Head of caudate nucleus (tissue), 42 donors: ENCODE measurements at regions of chr6 and their contacts with region 1.

Region 1: DNA sequence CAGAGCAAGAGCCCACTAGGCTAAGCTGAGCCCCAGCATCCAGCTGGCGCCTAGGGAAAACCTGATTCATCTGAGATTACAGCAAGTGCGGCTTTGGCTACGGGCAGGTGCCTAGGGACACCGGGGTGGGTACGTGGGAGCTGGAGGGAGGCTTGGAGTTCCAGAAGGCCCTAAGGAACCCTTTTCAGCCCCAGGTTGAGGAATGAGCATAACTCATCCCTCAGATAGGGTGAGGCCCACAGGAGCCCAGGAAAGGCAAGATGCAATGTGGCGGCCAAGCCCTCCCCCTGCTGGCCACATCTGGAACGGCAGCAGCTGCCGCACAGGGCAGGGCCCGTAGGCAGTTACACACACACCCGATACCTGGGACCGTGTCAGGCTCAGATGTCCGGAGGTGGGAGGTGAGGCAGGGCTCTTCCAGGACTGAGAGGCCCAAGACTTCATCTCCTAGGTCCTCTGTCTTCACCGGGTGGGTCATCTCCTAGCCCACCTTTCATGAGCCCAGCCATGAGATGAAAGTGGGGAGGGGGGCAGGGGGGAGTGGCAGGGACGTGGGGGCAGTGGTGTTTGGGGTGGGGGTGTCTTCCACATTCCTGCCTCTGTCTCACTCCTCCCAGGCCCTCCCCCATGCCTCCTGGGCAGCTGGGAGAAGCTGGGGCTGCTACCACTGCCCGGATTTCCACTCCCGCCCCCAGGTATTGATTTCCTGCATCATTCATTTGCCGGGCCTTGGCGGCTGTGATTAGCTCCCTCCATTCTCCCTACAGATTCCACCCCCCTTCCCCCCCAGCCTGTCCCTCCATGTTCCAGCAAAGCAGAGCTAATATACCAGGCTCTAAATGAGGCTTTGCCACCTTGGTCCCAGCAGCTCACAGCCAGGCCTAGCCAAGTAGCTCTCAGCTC is 5.5 kb downstream of the MDGA1 start:
- DNase-seq: peak; percentile 60 to 93 (median 86)

Region 2: DNA sequence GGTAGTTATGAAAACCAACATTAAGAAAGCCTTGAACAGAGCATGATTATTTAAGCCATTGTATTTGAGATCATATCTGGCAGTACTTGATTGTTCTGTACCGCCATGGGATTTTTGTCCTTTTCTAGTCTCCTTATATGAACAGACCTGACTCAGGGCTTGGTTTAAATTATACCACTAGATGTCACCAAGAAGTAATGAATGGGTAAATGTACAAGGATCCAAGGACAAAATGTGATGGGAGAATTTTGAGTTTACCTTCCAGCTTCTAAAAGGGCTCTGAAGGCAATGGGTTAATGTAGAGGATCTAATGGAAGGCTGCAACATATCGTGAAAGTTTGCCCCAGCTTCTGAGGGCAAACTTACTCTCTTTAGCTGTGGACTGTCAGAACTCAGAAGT is 326.4 kb before region 1 on chr6:
- intact Hi-C with region 1: loop called (anchors 10 kb)
- DNase-seq: no peak

Region 3: GRCh38 chr6:37483917-37484785 is 208.0 kb before region 1 on chr6:
- intact Hi-C with region 1: loop called (anchors 5 kb)
- DNase-seq: peak; percentile 47 to 88 (median 80)

Region 4: GRCh38 chr6:37489660-37490361 is 202.3 kb before region 1 on chr6:
- intact Hi-C with region 1: loop called (anchors 5 kb)
- DNase-seq: peak in 3 of 42 donors; percentile 6 to 39 (median 33)

Region 5: GRCh38 chr6:37566111-37566949 is 125.8 kb before region 1 on chr6:
- intact Hi-C with region 1: loop called (anchors 10 kb)
- DNase-seq: peak; percentile 36 to 89 (median 77)

Region 6: DNA sequence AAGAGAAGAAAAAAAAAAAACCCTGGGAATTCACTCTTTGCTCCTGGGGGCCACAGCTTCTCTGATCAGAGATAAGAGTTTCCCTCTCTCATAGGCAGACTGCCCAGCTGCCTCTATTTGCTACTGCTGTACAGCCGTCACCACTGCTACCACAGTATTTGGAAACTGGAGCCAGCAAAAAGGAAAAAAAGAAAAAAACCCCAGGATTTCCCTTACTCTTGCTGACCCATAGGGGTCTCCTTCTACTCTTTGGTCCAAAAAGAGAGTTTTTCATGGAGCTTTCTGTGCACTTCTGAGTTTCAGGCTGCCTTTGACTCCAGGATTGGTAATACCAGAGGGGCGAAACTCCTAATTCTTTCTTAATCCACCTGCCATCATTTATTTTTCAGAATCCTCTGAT is 84.2 kb before region 1 on chr6:
- intact Hi-C with region 1: loop called (anchors 5 kb)
- DNase-seq: peak in 1 of 42 donors; percentile 19